Heart right ventricle (tissue), 16 donors: ENCODE measurements at regions of chr18 and their contacts with region 1.

Region 1: GRCh38 chr18:79528846-79529245 is 133.1 kb downstream of the NFATC1 start:
- DNase-seq: peak; percentile 54 to 69
- ATAC-seq: peak in 5 of 8 donors; percentile 25 to 53 (median 43)
- H3K4me3 ChIP-seq: no peak overlapping the region
- H3K27ac ChIP-seq: no peak overlapping the region
- H3K4me1 ChIP-seq: peaks cover 10 to 24% (median 14%) of the 10 kb centered on the region in 9 donors
- H3K27me3 ChIP-seq: peaks cover 0 to 13% (median 0%) of the 10 kb centered on the region in 7 donors
- CTCF ChIP-seq: peak; percentile 76 to 95 (median 91)

Region 2: GRCh38 chr18:79117380-79117779 is 411.5 kb before region 1 on chr18:
- intact Hi-C with region 1: no loop called
- DNase-seq: no peak
- ATAC-seq: no peak
- H3K4me3 ChIP-seq: no peak overlapping the region
- H3K27ac ChIP-seq: no peak overlapping the region
- H3K4me1 ChIP-seq: peaks cover 0 to 4% (median 0%) of the 10 kb centered on the region in 9 donors
- H3K27me3 ChIP-seq: no peaks in the 10 kb centered on the region
- CTCF ChIP-seq: no peak

Region 3: DNA sequence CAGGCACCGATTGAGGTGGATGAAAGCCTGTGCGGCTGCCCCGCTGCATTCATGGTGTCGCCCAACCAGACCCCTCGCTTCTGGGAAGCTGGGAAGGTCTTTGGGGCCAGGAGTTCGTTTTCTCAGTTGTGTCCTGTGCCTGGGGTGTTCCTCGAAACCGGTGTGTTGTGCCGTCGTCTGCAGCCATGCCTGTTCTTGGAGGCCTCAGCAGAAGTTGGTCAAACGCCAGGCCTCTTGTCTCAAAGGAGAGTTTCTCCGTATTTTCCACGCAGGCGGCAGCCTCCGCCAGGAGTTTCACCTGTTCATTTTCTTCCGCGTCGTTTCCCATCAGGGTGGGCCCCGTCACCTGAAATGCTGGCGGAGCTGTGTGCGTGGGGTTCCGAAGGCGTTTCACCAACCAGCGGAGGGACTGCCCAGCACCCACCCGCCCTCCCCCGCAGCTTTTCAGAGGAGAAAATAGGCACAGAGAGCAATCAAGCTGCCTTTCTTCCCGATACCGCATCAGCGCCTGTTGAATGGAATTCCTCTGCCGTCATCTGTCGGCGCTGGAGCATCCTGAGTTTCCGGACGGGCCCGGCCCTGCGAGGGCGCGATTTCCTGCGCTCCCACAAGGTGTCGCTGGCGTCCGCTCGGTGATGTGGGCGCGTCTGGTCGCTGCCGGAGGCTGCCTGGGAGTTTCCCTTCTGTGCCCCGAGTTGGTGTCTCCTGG is 150.2 kb before region 1 on chr18:
- intact Hi-C with region 1: loop called (anchors 1 to 5 kb)
- DNase-seq: peak; percentile 79 to 83
- ATAC-seq: peak; percentile 64 to 90 (median 82)
- H3K4me3 ChIP-seq: no peak overlapping the region
- H3K27ac ChIP-seq: no peak overlapping the region
- H3K4me1 ChIP-seq: peaks cover 0 to 9% (median 4%) of the 10 kb centered on the region in 9 donors
- H3K27me3 ChIP-seq: no peaks in the 10 kb centered on the region
- CTCF ChIP-seq: peak in 8 of 9 donors; percentile 94 to 99 (median 97)

Region 4: DNA sequence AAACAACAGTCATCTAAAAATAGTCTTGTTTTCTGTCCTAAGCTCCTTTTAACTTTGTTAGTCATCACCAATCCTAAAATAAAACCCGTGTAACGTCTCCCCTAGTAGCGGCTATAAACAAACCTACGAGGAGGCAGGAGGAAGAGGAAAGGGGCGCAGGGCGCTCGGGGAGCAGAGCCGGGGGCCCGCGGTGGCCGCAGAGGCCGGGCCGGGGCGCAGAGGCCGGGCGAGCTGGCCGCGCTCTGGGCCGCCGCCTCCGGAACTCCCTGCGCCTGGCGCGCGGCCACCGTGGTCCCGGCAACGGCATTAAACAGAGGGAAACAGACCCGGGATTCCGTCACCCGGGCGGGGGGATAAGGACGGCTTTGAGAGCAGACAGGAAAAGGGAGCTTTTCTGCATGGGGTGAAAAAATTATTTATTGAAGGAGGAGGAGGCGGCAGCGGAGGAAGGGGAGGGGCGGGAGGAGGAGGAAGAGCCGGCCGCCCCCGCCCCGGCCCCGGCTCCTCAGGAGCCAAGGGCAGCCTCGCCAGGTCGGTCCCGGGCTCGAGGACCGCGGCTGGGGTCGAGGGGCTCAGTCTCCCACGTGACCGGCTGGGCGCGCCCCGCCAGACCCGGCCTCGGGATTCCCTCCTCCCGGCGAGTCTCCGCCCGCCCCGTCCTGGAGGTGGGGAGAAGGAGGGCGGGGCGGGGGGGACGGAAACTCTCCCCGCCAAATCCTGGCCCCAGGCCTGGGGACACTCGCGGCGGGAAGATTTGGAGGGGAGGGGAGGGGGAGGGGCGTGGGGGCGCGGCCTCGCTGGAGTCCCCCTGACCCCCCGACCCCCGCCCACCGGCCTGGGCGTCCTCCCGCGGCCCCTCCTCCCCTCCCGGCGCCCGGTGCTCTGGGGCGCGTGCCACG is 135.0 kb before region 1 on chr18:
- intact Hi-C with region 1: loop called in 2 of 10 experiments (anchors 5 kb)
- DNase-seq: peak; percentile 96 to 97
- ATAC-seq: peak; percentile 71 to 86 (median 83)
- H3K4me3 ChIP-seq: peak overlapping the region; percentile 24 to 65 (median 51)
- H3K27ac ChIP-seq: peak overlapping the region; percentile 90 to 98 (median 94)
- H3K4me1 ChIP-seq: peaks cover 7 to 44% (median 28%) of the 10 kb centered on the region in 9 donors
- H3K27me3 ChIP-seq: peaks cover 0 to 76% (median 0%) of the 10 kb centered on the region in 7 donors
- CTCF ChIP-seq: no peak

Region 5: GRCh38 chr18:79458131-79458838 is 70.6 kb before region 1 on chr18:
- intact Hi-C with region 1: loop called in 1 of 10 experiments (anchors 5 kb)
- DNase-seq: peak; percentile 77 to 80
- ATAC-seq: peak; percentile 75 to 88 (median 84)
- H3K4me3 ChIP-seq: peak overlapping the region in 7 of 10 donors; percentile 14 to 37 (median 32)
- H3K27ac ChIP-seq: peak overlapping the region; percentile 56 to 91 (median 80)
- H3K4me1 ChIP-seq: peaks cover 17 to 50% (median 41%) of the 10 kb centered on the region in 9 donors
- H3K27me3 ChIP-seq: no peaks in the 10 kb centered on the region
- CTCF ChIP-seq: no peak

Region 6: DNA sequence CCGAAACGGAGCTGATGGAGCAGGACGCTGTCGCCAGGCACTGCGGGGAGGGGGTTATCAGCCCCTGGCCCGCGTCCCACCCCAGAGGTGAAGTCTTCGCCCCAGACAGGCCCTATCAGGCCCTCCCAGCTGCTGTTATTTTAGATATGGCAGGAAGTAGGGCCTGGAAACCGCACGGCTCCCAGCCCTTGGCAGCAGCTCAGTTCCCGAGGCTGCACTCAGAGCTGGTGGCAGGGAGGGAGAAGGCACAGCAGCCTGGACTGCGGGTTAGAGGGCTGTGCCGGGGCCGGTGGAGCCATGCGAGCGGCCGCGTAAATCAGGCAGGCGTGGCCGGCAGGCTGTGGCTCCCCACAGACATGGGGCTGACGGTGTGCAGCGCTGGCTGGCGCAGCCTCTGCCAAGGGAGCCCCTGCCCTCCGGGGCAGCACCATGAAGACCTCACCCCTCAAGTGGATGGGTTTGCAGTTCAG is 21.7 kb before region 1 on chr18:
- intact Hi-C with region 1: loop called in 1 of 10 experiments (anchors 2 kb)
- DNase-seq: peak; percentile 83 to 84
- ATAC-seq: peak; percentile 85 to 96 (median 92)
- H3K4me3 ChIP-seq: peak overlapping the region in 9 of 10 donors; percentile 24 to 52 (median 42)
- H3K27ac ChIP-seq: peak overlapping the region; percentile 80 to 98 (median 94)
- H3K4me1 ChIP-seq: peaks cover 13 to 41% (median 29%) of the 10 kb centered on the region in 9 donors
- H3K27me3 ChIP-seq: no peaks in the 10 kb centered on the region
- CTCF ChIP-seq: no peak

Region 7: GRCh38 chr18:79599441-79599931 is 70.6 kb after region 1 on chr18:
- intact Hi-C with region 1: loop called in 1 of 10 experiments (anchors 10 kb)
- DNase-seq: no peak
- ATAC-seq: no peak
- H3K4me3 ChIP-seq: no peak overlapping the region
- H3K27ac ChIP-seq: no peak overlapping the region
- H3K4me1 ChIP-seq: peaks cover 0 to 21% (median 9%) of the 10 kb centered on the region in 9 donors
- H3K27me3 ChIP-seq: peaks cover 0 to 33% (median 22%) of the 10 kb centered on the region in 7 donors
- CTCF ChIP-seq: no peak

Region 8: DNA sequence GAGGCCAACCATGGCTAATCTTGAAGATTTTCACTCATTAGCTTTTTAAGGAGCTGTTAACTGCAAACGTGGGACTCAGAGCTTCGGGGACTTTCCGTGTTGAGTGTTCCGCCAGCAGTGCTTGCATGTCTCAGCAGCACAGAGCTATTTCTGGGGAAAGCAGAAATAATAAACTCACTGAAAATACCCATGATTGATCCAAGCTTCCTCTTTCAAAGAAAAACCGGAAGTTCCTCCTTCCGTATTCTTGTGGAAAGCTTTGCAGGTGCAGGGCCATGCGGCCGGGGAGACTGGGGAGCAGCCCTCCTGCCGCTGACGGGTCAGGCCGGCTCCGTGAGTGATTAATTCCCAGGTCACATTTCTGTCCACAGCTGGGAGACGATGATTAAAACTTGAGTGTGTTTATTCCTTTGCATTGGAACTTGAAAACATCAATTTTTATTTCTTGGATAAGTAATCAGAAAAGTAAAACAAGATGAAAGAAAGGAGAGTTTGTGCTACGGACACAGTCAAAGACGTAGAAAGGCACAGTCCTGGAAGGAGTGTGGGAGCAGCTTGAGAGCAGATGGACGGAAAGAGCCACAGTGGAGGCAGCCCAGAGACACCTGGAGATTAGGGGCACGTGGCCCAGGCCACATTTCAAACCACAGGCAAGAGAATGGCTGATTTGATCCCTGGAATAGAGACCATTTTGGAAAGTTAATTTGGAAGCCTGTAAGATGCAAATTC is 96.5 kb after region 1 on chr18:
- intact Hi-C with region 1: no loop called
- DNase-seq: no peak
- ATAC-seq: peak in 6 of 8 donors; percentile 34 to 73 (median 46)
- H3K4me3 ChIP-seq: no peak overlapping the region
- H3K27ac ChIP-seq: peak overlapping the region in 1 of 10 donors; percentile 26
- H3K4me1 ChIP-seq: peaks cover 0 to 24% (median 0%) of the 10 kb centered on the region in 9 donors
- H3K27me3 ChIP-seq: peaks cover 0 to 42% (median 23%) of the 10 kb centered on the region in 7 donors
- CTCF ChIP-seq: no peak

Region 9: DNA sequence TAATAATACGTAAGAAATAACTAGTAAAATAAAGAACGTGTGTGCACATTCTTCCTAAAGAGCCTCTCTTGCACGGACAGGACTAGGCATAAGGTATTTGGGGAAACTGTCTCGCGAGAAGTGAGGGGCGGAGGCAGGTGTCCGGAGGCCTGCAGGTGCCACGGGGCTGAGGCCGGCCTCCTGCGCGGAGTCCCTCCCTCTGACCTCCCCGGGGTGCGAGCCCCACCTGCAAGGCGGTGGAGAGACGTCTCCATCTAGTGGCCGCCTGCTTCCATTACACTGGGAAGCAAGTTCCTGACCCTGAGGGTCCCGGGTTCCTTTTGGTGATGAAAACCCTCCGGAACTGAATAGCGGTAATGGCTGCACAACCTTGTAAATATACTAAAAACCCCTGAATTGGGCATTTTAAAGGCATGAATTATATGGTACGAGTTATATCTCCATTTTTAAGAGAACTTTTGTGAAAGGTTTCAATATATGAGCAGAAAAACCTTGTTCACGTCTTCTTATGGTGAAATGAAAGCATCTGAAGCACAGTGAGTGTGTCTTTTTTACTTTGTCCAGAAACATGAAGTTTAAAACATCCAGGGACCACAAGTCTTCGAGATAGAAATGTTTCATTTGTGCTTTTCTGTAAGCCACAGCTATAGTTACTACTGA is 115.3 kb after region 1 on chr18:
- intact Hi-C with region 1: loop called (anchors 5 to 10 kb)
- DNase-seq: peak; percentile 54 to 66
- ATAC-seq: peak; percentile 67 to 88 (median 84)
- H3K4me3 ChIP-seq: peak overlapping the region in 2 of 10 donors; percentile 5 to 10
- H3K27ac ChIP-seq: peak overlapping the region in 2 of 10 donors; percentile 8 to 49
- H3K4me1 ChIP-seq: peaks cover 0 to 19% (median 0%) of the 10 kb centered on the region in 9 donors
- H3K27me3 ChIP-seq: peaks cover 0 to 29% (median 9%) of the 10 kb centered on the region in 7 donors
- CTCF ChIP-seq: peak; percentile 93 to 100 (median 98)

Region 10: GRCh38 chr18:79815657-79816056 is 286.8 kb after region 1 on chr18:
- intact Hi-C with region 1: no loop called
- DNase-seq: no peak
- ATAC-seq: no peak
- H3K4me3 ChIP-seq: no peak overlapping the region
- H3K27ac ChIP-seq: no peak overlapping the region
- H3K4me1 ChIP-seq: peaks cover 0 to 22% (median 0%) of the 10 kb centered on the region in 9 donors
- H3K27me3 ChIP-seq: peaks cover 0 to 47% (median 17%) of the 10 kb centered on the region in 7 donors
- CTCF ChIP-seq: no peak